ENCODE measurements at regions of chr5 and their contacts with region 1.

Region 1: GRCh38 chr5:170638454-170639220 is 134.8 kb downstream of the KCNIP1 start:
- DNase-seq: peak; percentile 73 to 86
- ATAC-seq: peak; percentile 61
- H3K4me3 ChIP-seq: no peak overlapping the region
- H3K27ac ChIP-seq: no peak overlapping the region
- H3K4me1 ChIP-seq: no peaks in the 10 kb centered on the region
- H3K27me3 ChIP-seq: no peaks in the 10 kb centered on the region

Region 2: GRCh38 chr5:170278611-170279452 is 359.8 kb before region 1 on chr5:
- intact Hi-C with region 1: loop called (anchors 5 to 10 kb)
- DNase-seq: peak; percentile 81 to 82
- ATAC-seq: peak; percentile 31
- H3K4me3 ChIP-seq: no peak overlapping the region
- H3K27ac ChIP-seq: no peak overlapping the region
- H3K4me1 ChIP-seq: no peaks in the 10 kb centered on the region
- H3K27me3 ChIP-seq: no peaks in the 10 kb centered on the region

Region 3: GRCh38 chr5:170791325-170791954 is 152.8 kb after region 1 on chr5:
- intact Hi-C with region 1: loop called in 1 of 2 experiments (anchors 5 kb)
- DNase-seq: peak; percentile 72 to 82
- ATAC-seq: peak; percentile 59
- H3K4me3 ChIP-seq: no peak overlapping the region
- H3K27ac ChIP-seq: no peak overlapping the region
- H3K4me1 ChIP-seq: no peaks in the 10 kb centered on the region
- H3K27me3 ChIP-seq: no peaks in the 10 kb centered on the region